ENCODE measurements at regions of chrX and their contacts with region 1.

Region 1: GRCh38 chrX:149631234-149632165 is at the start of gene TMEM185A:
- DNase-seq: no peak
- ATAC-seq: peak; percentile 86
- H3K4me3 ChIP-seq: peak within 1 kb of the TSS; percentile 66
- H3K27ac ChIP-seq: no peak within 1 kb of the TSS
- H3K4me1 ChIP-seq: no peaks in the 10 kb centered on the region
- H3K27me3 ChIP-seq: no peaks in the 10 kb centered on the region
- CTCF ChIP-seq: no peak
- EP300 ChIP-seq: no peak
- POLR2A ChIP-seq: peak; percentile 75
- RAD21 ChIP-seq: no peak
- polyA plus RNA-seq, gene TMEM185A: 2.4 to 3.9 TPM

Region 2: DNA sequence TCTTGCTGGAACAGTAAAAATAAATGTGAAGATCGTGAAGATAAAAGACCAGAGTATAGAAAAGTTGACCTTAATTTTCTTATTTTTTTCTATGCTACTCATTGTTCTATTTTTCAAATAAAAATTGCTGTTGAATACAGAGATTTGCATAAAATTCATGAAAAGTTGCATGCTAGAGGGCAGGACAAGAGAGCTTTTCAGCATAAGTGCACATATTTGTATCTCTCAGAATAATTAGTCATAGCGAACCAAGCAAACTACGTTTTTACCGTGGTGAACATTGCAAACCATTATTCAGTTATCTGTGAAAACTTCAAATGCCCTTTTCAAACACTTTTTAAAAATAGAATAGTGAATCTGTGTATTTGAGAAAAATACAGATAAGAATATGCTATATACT is 1157.5 kb before region 1 on chrX:
- CTCF ChIA-PET with region 1: no interaction called
- POLR2A ChIA-PET with region 1: no interaction called
- RAD21 ChIA-PET with region 1: no interaction called
- SMC1A ChIA-PET with region 1: no interaction called
- in situ Hi-C with region 1: no loop called
- intact Hi-C with region 1: no loop called
- DNase-seq: no peak
- ATAC-seq: no peak
- H3K4me3 ChIP-seq: no peak overlapping the region
- H3K27ac ChIP-seq: no peak overlapping the region
- H3K4me1 ChIP-seq: no peaks in the 10 kb centered on the region
- H3K27me3 ChIP-seq: no peaks in the 10 kb centered on the region
- CTCF ChIP-seq: no peak
- EP300 ChIP-seq: no peak
- POLR2A ChIP-seq: no peak
- RAD21 ChIP-seq: no peak

Region 3: DNA sequence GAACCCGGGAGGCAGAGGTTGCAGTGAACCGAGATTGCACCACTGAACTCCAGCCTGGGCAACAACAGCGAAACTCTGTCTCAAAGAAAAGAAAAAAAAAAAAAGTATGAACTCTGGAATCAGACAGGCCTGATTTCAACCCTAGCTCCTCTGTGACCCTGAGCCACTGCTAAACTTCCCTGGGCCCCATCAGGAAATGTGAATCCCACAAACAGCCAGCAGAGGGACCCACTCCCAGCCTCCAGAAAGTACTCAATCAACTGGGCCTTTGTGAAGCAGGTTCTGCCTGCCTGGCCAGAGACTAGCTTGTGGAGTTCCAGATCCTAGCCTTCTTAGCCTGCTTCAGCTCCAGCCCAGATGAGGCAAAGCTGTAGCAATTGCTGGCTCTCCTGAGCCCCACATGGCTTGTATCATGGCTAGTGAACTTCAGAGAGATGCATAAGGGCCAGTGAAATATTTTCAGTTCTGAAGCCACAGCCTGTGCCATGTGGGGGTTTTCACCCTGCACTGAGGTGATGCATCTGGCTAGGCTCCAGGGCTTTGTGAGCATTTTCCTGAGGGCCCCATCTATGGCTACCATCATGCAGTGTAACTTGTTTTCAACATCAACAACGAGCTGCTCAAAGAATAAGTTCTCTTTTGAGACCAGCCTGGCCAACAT is 119.1 kb before region 1 on chrX:
- CTCF ChIA-PET with region 1: interaction called, 3 read pairs
- POLR2A ChIA-PET with region 1: no interaction called
- RAD21 ChIA-PET with region 1: no interaction called
- SMC1A ChIA-PET with region 1: no interaction called
- in situ Hi-C with region 1: no loop called
- intact Hi-C with region 1: loop called (anchors 10 kb)
- DNase-seq: peak; percentile 13
- ATAC-seq: peak; percentile 92
- H3K4me3 ChIP-seq: no peak overlapping the region
- H3K27ac ChIP-seq: peak overlapping the region; percentile 50; the same call in 1 of the 2 replicates
- H3K4me1 ChIP-seq: peaks cover 7% of the 10 kb centered on the region
- H3K27me3 ChIP-seq: no peaks in the 10 kb centered on the region; a peak in 2 of 4 replicates
- CTCF ChIP-seq: peak; percentile 61 to 72 (median 70)
- EP300 ChIP-seq: no peak
- POLR2A ChIP-seq: no peak
- RAD21 ChIP-seq: peak; percentile 61

Region 4: GRCh38 chrX:149527705-149528104 is 103.8 kb before region 1 on chrX:
- CTCF ChIA-PET with region 1: no interaction called
- POLR2A ChIA-PET with region 1: no interaction called
- RAD21 ChIA-PET with region 1: no interaction called
- SMC1A ChIA-PET with region 1: no interaction called
- in situ Hi-C with region 1: loop called (anchors 10 kb)
- intact Hi-C with region 1: no loop called
- DNase-seq: no peak
- ATAC-seq: peak; percentile 43
- H3K4me3 ChIP-seq: no peak overlapping the region
- H3K27ac ChIP-seq: no peak overlapping the region
- H3K4me1 ChIP-seq: peaks cover 18% of the 10 kb centered on the region
- H3K27me3 ChIP-seq: no peaks in the 10 kb centered on the region
- CTCF ChIP-seq: peak; percentile 53 to 63 (median 62); a peak in 5 of 6 replicates
- EP300 ChIP-seq: no peak
- POLR2A ChIP-seq: no peak
- RAD21 ChIP-seq: peak; percentile 62

Region 5: DNA sequence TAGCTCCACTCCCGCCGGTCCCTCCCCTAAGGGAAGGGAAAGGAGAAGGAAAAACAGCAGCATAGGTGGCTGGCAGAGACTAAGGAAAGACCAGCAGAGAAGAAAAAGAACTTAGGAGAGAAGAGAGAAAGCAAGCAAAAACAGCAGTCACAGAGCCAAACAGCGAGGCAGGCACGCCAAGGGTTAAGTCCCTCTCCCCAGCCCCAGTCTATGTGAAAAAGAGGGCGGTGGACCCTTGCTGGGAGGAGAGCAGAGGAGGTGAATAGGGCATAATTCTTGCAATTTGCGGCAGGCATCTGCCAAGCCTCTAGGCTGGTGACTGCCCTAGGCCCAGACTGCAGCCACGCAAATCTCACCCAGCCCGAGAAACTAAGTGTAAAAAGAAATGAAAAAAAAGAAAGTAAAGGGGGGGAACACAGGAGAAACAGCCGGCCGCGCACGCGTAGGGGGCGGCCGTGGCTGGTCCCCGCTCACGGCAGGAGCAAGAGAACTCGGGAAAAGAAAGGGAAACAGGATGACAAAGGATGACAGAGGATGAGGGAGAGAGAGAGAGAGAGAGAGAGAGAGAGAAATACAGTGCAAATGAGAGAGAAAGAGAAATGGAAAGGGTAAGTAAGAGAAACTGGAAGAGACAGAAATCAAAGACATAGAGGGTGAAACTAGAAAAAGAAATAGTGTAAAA is 198.8 kb after region 1 on chrX:
- CTCF ChIA-PET with region 1: no interaction called
- POLR2A ChIA-PET with region 1: no interaction called
- RAD21 ChIA-PET with region 1: interaction called, 3 read pairs
- SMC1A ChIA-PET with region 1: no interaction called
- in situ Hi-C with region 1: no loop called
- intact Hi-C with region 1: loop called (anchors 5 kb)
- DNase-seq: peak; percentile 17
- ATAC-seq: peak; percentile 82
- H3K4me3 ChIP-seq: peak overlapping the region; percentile 57; the same call in 1 of the 2 replicates
- H3K27ac ChIP-seq: peak overlapping the region; percentile 79
- H3K4me1 ChIP-seq: no peaks in the 10 kb centered on the region
- H3K27me3 ChIP-seq: no peaks in the 10 kb centered on the region
- CTCF ChIP-seq: no peak
- EP300 ChIP-seq: no peak
- POLR2A ChIP-seq: no peak
- RAD21 ChIP-seq: no peak

Region 6: GRCh38 chrX:150269605-150270254 is 638.2 kb after region 1 on chrX:
- CTCF ChIA-PET with region 1: no interaction called
- POLR2A ChIA-PET with region 1: no interaction called
- RAD21 ChIA-PET with region 1: no interaction called
- SMC1A ChIA-PET with region 1: no interaction called
- in situ Hi-C with region 1: no loop called
- intact Hi-C with region 1: no loop called
- DNase-seq: no peak
- ATAC-seq: no peak
- H3K4me3 ChIP-seq: no peak overlapping the region
- H3K27ac ChIP-seq: no peak overlapping the region
- H3K4me1 ChIP-seq: no peaks in the 10 kb centered on the region
- H3K27me3 ChIP-seq: no peaks in the 10 kb centered on the region; a peak in 1 of 4 replicates
- CTCF ChIP-seq: no peak
- EP300 ChIP-seq: no peak
- POLR2A ChIP-seq: no peak
- RAD21 ChIP-seq: no peak